Caco-2 (cell line): ENCODE measurements at regions of chr3 and their contacts with region 1.

Region 1: DNA sequence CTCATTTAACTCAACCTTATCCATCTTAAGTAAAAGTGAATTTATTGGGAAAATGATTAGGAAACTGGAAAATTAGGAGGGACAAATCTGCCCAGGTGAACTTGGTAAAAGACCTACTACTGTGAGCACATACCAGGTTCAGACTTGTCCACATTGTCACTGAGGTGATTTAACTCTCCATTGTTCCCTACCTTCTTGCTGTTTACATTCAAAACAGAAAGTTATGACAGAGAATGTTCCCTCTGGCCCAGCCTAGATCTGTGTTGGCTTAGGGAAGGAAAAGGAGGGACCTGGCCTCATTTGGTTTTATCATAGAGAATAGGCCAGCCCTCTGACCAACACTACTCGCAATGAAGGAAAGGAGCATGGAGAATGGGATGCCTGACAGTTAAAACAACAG is 117.6 kb downstream of the SATB1 start:
- DNase-seq: no peak
- H3K4me3 ChIP-seq: no peak overlapping the region
- H3K4me3 Mint-ChIP-seq: no peak overlapping the region
- H3K27ac Mint-ChIP-seq: no peak overlapping the region
- H3K4me1 ChIP-seq: no peaks in the 10 kb centered on the region
- H3K4me1 Mint-ChIP-seq: peaks cover 8% of the 10 kb centered on the region
- H3K27me3 ChIP-seq: no peaks in the 10 kb centered on the region
- H3K27me3 Mint-ChIP-seq: no peaks in the 10 kb centered on the region
- CTCF ChIP-seq: no peak

Region 2: GRCh38 chr3:18258492-18258891 is 49.0 kb before region 1 on chr3:
- CTCF ChIA-PET with region 1: no interaction called
- POLR2A ChIA-PET with region 1: no interaction called
- intact Hi-C with region 1: no loop called
- DNase-seq: no peak
- H3K4me3 ChIP-seq: no peak overlapping the region
- H3K4me3 Mint-ChIP-seq: no peak overlapping the region
- H3K27ac Mint-ChIP-seq: no peak overlapping the region
- H3K4me1 ChIP-seq: no peaks in the 10 kb centered on the region
- H3K4me1 Mint-ChIP-seq: no peaks in the 10 kb centered on the region
- H3K27me3 ChIP-seq: no peaks in the 10 kb centered on the region
- H3K27me3 Mint-ChIP-seq: no peaks in the 10 kb centered on the region
- CTCF ChIP-seq: no peak

Region 3: GRCh38 chr3:18389108-18389733 is 81.7 kb after region 1 on chr3:
- CTCF ChIA-PET with region 1: no interaction called
- POLR2A ChIA-PET with region 1: no interaction called
- intact Hi-C with region 1: loop called (anchors 5 kb)
- DNase-seq: peak in 1 of 2 experiments; percentile 43
- H3K4me3 ChIP-seq: no peak overlapping the region
- H3K4me3 Mint-ChIP-seq: no peak overlapping the region
- H3K27ac Mint-ChIP-seq: no peak overlapping the region
- H3K4me1 ChIP-seq: 0 out of 2 replicates have a peak, but pooled peaks cover 3% of the 10 kb centered on the region
- H3K4me1 Mint-ChIP-seq: no peaks in the 10 kb centered on the region
- H3K27me3 ChIP-seq: no peaks in the 10 kb centered on the region
- H3K27me3 Mint-ChIP-seq: no peaks in the 10 kb centered on the region
- CTCF ChIP-seq: peak; percentile 48 to 58